Panc1 (cell line): ENCODE measurements at regions of chr1 and their contacts with region 1.

Region 1: DNA sequence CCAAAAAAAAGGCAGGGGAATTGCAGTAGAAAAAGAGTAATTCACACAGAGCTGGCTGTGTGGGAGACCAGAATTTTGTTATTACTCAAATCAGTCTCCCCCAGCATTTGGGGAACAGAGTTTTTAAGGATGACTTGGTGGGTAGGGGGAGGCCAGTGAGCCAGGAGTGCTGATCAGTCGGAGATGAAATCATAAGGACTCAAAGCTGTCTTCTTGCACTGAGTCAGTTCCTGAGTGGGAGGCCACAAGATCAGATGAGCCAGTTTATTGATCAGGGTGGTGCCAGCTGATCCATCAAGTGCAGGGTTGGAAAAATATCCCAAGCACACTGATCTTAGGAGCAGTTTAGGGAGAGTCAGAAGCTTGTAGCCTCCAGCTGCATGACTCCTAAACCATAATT is 23.7 kb upstream of the EDARADD start:
- DNase-seq: no peak
- ATAC-seq: peak; percentile 61; the same call in 1 of the 2 replicates
- H3K4me3 ChIP-seq: no peak overlapping the region
- H3K27ac ChIP-seq: peak overlapping the region; percentile 60
- H3K4me1 ChIP-seq: peaks cover 8% of the 10 kb centered on the region; the same call in 1 of the 2 replicates
- H3K27me3 ChIP-seq: no peaks in the 10 kb centered on the region
- CTCF ChIP-seq: no peak

Region 2: GRCh38 chr1:236354330-236355147 is 15.9 kb before region 1 on chr1:
- CTCF ChIA-PET with region 1: no interaction called
- POLR2A ChIA-PET with region 1: interaction called, 10 read pairs
- in situ Hi-C with region 1: no loop called
- intact Hi-C with region 1: no loop called
- DNase-seq: no peak
- ATAC-seq: no peak; the same call in 1 of the 2 replicates
- H3K4me3 ChIP-seq: no peak overlapping the region
- H3K27ac ChIP-seq: peak overlapping the region; percentile 60; the same call in 1 of the 2 replicates
- H3K4me1 ChIP-seq: peaks cover 13% of the 10 kb centered on the region; the same call in 1 of the 2 replicates
- H3K27me3 ChIP-seq: no peaks in the 10 kb centered on the region
- CTCF ChIP-seq: no peak

Region 3: DNA sequence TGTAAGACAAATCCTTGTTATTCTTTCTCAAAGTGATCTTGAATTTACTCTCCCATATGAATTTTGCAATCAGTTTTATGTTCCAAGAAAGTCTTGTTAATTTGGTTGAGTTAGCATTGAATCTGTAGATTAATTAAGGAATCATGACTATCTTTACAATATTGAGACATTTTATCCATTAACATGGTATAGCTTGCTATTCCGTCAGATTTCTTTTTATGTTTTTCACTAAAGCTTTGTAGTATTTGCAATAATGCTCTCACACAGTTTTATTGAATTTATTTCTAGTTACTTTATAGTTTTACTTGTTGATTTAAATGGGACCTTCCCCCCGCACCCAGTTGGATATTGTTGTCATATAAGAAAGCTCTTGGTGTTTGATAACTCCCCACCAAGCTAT is 17.9 kb after region 1 on chr1:
- CTCF ChIA-PET with region 1: no interaction called
- POLR2A ChIA-PET with region 1: interaction called, 10 read pairs
- in situ Hi-C with region 1: no loop called
- intact Hi-C with region 1: no loop called
- DNase-seq: no peak
- ATAC-seq: no peak
- H3K4me3 ChIP-seq: no peak overlapping the region
- H3K27ac ChIP-seq: peak overlapping the region; percentile 13; the same call in 1 of the 2 replicates
- H3K4me1 ChIP-seq: peaks cover 23% of the 10 kb centered on the region
- H3K27me3 ChIP-seq: no peaks in the 10 kb centered on the region
- CTCF ChIP-seq: no peak